Dendritic cell treated with granulocyte-macrophage colony-stimulating factor and Interleukin-4, amounts not matched to agents 40 ng/mL and 50 ng/mL, for 4 days (primary cell): ENCODE measurements at regions of chr14 and their contacts with region 1.

Region 1: DNA sequence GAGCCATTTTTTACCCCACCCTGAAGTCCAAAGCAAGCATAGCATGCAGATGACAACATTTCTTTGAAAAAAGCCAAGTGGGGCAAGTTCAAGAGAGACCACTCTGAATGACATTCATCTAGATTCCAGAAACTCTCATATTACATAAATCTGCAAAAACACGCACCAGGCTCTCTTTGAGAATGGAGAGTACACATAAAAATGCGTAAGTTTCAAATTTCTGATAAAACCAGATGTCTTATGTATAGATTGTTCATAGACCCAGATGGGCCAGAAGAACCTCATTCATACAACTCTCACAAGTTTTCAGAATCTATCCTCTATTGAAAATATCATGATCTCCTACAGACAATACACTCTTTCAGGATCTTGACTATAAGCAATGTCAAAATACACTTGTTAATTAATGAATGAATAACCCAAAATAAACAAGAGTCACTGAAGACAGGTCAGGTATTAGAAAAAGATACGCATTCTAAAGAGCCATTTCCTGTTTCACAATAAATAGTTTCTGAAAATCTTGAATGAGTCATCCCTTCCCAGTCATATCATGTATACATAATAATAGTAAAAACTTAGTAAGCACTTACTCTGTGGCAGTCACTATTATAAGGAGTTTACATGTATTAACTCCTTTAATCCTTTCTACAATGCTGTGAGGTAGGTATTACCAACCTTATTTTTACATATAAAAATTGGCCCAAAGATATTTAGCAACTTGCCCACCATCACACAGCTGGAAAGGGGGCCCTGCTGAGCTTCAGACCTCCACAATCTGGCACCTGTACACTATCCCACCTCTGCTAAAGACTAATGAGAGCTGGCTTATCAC is 72.0 kb downstream of the PPP2R5E start:
- H3K4me3 Mint-ChIP-seq: no peak overlapping the region
- H3K27ac Mint-ChIP-seq: no peak overlapping the region
- H3K4me1 Mint-ChIP-seq: peaks cover 15% of the 10 kb centered on the region
- H3K27me3 Mint-ChIP-seq: no peaks in the 10 kb centered on the region

Region 2: DNA sequence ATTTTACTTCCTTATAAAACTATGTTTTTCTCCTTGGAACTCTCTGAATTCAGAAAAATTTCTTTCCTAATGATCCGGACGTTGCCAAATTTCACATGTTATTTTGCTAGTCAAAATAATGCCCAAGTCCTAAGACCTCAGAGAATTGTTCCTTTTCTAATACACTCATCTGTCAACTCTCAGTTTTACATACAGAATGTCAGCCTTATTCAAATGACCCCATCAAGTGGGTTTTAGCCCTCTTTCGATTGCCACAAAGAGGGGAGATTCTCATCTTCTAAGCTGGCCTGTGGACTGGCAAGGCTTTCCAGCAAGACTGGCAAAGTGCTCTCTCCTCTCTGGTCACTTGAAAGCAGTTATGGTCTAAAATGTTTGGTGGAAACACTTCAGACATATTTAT is 53.2 kb before region 1 on chr14:
- intact Hi-C with region 1: no loop called
- H3K4me3 Mint-ChIP-seq: no peak overlapping the region
- H3K27ac Mint-ChIP-seq: no peak overlapping the region
- H3K4me1 Mint-ChIP-seq: peaks cover 2% of the 10 kb centered on the region
- H3K27me3 Mint-ChIP-seq: no peaks in the 10 kb centered on the region

Region 3: GRCh38 chr14:63510538-63510937 is 39.4 kb after region 1 on chr14:
- intact Hi-C with region 1: no loop called
- H3K4me3 Mint-ChIP-seq: no peak overlapping the region
- H3K27ac Mint-ChIP-seq: no peak overlapping the region
- H3K4me1 Mint-ChIP-seq: peaks cover 26% of the 10 kb centered on the region
- H3K27me3 Mint-ChIP-seq: no peaks in the 10 kb centered on the region

Region 4: DNA sequence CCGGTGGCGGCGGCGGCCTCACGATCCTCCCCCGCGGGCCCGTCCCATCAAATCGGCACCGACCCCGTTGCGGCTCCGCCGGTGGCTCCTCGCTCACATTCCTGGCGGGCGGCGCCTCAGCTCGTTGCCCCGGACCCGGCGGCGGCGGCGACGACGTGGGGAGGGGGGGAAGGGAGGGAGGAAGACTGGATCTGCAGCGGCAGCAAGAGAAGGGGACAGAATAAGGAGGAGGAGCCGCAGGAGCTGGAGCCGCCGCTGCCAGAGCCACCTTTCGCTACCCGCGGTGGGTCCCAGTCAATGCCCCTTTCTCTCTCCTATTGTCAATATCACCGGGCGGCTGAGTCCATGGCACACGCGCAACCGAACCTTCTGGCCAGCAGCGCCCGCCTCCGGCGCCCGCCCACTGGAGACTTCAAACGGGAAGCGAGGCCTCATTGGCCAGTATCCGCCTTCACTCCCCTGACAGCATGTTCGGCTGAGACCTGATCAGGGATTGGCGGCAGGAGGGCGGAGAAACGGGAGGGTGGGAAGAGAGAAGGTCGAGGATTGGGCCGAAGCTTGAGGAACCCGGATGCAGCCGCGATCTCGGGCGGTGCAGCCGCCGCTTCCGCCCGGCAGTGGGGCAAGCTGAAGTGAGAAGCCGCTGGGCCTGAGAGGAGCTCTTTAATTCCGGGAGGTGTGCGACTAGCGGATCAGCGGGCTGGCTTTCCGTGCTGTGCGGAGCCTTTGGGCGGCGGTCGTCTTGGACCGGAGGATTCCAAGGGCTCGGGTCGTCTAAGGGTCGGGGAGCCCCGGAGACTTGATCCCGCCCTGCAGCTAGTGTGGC is 72.0 kb after region 1 on chr14 and contains the start of gene PPP2R5E:
- intact Hi-C with region 1: loop called (anchors 5 kb)
- H3K4me3 Mint-ChIP-seq: peak within 1 kb of the TSS; percentile 93
- H3K27ac Mint-ChIP-seq: peak within 1 kb of the TSS; percentile 94
- H3K4me1 Mint-ChIP-seq: peaks cover 22% of the 10 kb centered on the region
- H3K27me3 Mint-ChIP-seq: no peaks in the 10 kb centered on the region